Stomach (tissue), 19 donors: ENCODE measurements at regions of chr4 and their contacts with region 1.

Region 1: GRCh38 chr4:124262211-124263179 is 450.0 kb downstream of the ANKRD50 start:
- DNase-seq: peak; percentile 50 to 94
- H3K4me3 ChIP-seq: no peak overlapping the region
- H3K27ac ChIP-seq: peak overlapping the region in 1 of 5 donors; percentile 9
- H3K4me1 ChIP-seq: no peaks in the 10 kb centered on the region
- H3K27me3 ChIP-seq: no peaks in the 10 kb centered on the region
- CTCF ChIP-seq: peak in 6 of 7 experiments; percentile 32 to 82 (median 68)
- EP300 ChIP-seq: no peak
- POLR2A ChIP-seq: no peak

Region 2: DNA sequence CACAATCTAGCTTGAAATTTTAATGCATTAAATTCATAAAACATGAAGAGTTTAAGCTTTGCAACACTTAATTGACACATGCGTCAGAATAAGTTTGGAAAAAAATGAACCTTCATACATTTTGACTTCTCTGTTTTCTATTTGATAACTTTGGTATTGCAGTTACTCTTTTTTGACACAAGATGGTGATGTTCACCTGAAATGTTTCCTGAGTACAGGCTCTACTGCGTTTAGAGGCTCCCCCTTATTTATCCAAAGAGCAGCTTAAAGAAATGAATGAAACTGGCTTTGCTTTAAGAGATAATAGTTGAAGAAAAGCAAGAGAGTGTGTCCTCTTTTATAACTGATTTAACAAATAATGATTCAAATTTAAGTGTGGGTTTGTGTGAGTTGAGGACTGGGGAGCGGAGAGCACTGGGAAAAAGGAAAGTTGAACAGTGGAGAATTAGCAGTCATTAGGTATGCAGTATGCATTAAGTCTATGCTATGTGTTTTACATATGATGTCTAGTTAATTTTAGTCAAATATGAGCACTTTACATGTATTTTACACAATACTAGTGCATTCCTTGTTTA is 1159.5 kb before region 1 on chr4:
- intact Hi-C with region 1: loop called (anchors 10 kb)
- DNase-seq: peak in 1 of 2 donors; percentile 65
- H3K4me3 ChIP-seq: no peak overlapping the region
- H3K27ac ChIP-seq: no peak overlapping the region
- H3K4me1 ChIP-seq: peaks cover 0 to 20% (median 7%) of the 10 kb centered on the region in 4 donors
- H3K27me3 ChIP-seq: no peaks in the 10 kb centered on the region
- CTCF ChIP-seq: peak in 5 of 7 experiments; percentile 60 to 69 (median 67)
- EP300 ChIP-seq: no peak
- POLR2A ChIP-seq: no peak

Region 3: GRCh38 chr4:124409044-124409443 is 146.5 kb after region 1 on chr4:
- intact Hi-C with region 1: no loop called
- DNase-seq: no peak
- H3K4me3 ChIP-seq: no peak overlapping the region
- H3K27ac ChIP-seq: no peak overlapping the region
- H3K4me1 ChIP-seq: no peaks in the 10 kb centered on the region
- H3K27me3 ChIP-seq: no peaks in the 10 kb centered on the region
- CTCF ChIP-seq: no peak
- EP300 ChIP-seq: no peak
- POLR2A ChIP-seq: no peak